ENCODE measurements at regions of chr1 and their contacts with region 1.

Region 1: DNA sequence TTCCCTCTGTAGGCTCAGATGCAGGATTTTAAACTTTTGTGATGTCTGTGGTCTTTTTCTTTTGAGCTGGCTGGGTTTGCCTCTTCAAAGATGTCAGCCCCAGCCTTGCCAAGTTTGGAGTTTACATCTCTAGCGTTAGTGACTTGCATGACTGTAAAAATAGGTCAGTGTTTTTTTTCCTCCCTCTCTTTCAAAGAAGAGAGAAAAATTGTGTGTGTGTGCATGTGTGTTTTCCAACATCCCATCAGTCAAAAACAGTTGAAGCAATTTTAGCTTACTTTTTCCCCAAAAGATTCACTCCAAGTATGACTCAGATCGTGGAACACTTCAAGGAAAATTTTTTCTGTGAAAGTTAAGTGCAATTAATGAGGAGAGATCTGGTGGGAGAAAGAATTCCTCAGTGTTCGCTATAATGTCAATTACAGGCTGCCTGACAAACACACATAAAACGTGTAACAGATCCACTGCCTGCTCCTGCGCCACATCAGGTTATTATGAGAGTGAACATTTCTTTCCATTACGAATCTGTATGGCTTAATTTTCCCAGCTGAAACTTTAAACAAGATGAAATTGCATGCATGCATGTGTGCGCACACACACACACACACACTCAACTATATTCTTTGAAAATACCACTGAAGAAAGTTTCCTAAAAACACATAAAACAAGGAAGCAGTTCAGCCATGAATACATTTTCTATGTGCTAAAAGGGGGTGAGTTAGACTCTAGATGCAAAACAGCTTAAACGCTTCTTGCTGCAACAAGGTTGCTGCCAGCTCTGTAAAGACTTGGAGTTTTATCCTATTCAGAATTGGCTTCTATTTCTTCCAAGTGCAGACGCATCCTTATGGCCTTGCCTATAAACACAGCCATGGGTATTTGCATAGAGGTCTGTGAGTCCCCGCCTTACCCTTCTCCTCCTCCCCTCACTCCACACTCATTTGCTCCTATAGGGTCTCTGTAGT is 55.5 kb downstream of the TLR5 start:
- DNase-seq: no peak
- ATAC-seq: no peak
- H3K4me3 Mint-ChIP-seq: no peak overlapping the region
- H3K27ac Mint-ChIP-seq: no peak overlapping the region
- H3K4me1 Mint-ChIP-seq: peaks cover 27% of the 10 kb centered on the region
- H3K27me3 Mint-ChIP-seq: peaks cover 58% of the 10 kb centered on the region
- CTCF ChIP-seq: no peak

Region 2: GRCh38 chr1:222736972-222737371 is 350.6 kb before region 1 on chr1 and contains the start of gene FAM177B:
- CTCF ChIA-PET with region 1: interaction called, 20 read pairs
- POLR2A ChIA-PET with region 1: no interaction called
- DNase-seq: no peak
- ATAC-seq: no peak
- H3K4me3 Mint-ChIP-seq: no peak within 1 kb of the TSS
- H3K27ac Mint-ChIP-seq: peak within 1 kb of the TSS; percentile 81
- H3K4me1 Mint-ChIP-seq: peaks cover 2% of the 10 kb centered on the region; the same call in 1 of the 2 replicates
- H3K27me3 Mint-ChIP-seq: no peaks in the 10 kb centered on the region
- CTCF ChIP-seq: no peak
- total RNA-seq, gene FAM177B: not detected in 3 replicates

Region 3: GRCh38 chr1:222792744-222793143 is 294.8 kb before region 1 on chr1:
- CTCF ChIA-PET with region 1: interaction called, 28 read pairs
- POLR2A ChIA-PET with region 1: no interaction called
- DNase-seq: no peak
- ATAC-seq: peak; percentile 58
- H3K4me3 Mint-ChIP-seq: no peak overlapping the region
- H3K27ac Mint-ChIP-seq: no peak overlapping the region
- H3K4me1 Mint-ChIP-seq: peaks cover 7% of the 10 kb centered on the region; the same call in 1 of the 2 replicates
- H3K27me3 Mint-ChIP-seq: peaks cover 26% of the 10 kb centered on the region
- CTCF ChIP-seq: 0 out of 2 replicates have a peak, but pooled peaks have one; percentile 13

Region 4: GRCh38 chr1:223029985-223030769 is 57.4 kb before region 1 on chr1:
- CTCF ChIA-PET with region 1: interaction called, 14 read pairs
- POLR2A ChIA-PET with region 1: interaction called, 3 read pairs
- DNase-seq: peak; percentile 54
- ATAC-seq: peak; percentile 84
- H3K4me3 Mint-ChIP-seq: peak overlapping the region; percentile 99
- H3K27ac Mint-ChIP-seq: peak overlapping the region; percentile 100
- H3K4me1 Mint-ChIP-seq: peaks cover 60% of the 10 kb centered on the region
- H3K27me3 Mint-ChIP-seq: no peaks in the 10 kb centered on the region
- CTCF ChIP-seq: no peak

Region 5: GRCh38 chr1:223074445-223075300 is 12.9 kb before region 1 on chr1:
- CTCF ChIA-PET with region 1: interaction called, 32 read pairs
- POLR2A ChIA-PET with region 1: no interaction called
- DNase-seq: no peak
- ATAC-seq: peak; percentile 51
- H3K4me3 Mint-ChIP-seq: no peak overlapping the region
- H3K27ac Mint-ChIP-seq: no peak overlapping the region
- H3K4me1 Mint-ChIP-seq: peaks cover 50% of the 10 kb centered on the region
- H3K27me3 Mint-ChIP-seq: peaks cover 62% of the 10 kb centered on the region
- CTCF ChIP-seq: no peak

Region 6: GRCh38 chr1:223114871-223115270 is 27.3 kb after region 1 on chr1:
- CTCF ChIA-PET with region 1: interaction called, 15 read pairs
- POLR2A ChIA-PET with region 1: no interaction called
- DNase-seq: no peak
- ATAC-seq: no peak
- H3K4me3 Mint-ChIP-seq: no peak overlapping the region
- H3K27ac Mint-ChIP-seq: no peak overlapping the region
- H3K4me1 Mint-ChIP-seq: peaks cover 9% of the 10 kb centered on the region
- H3K27me3 Mint-ChIP-seq: peaks cover 4% of the 10 kb centered on the region; the same call in 1 of the 2 replicates
- CTCF ChIP-seq: no peak

Region 7: GRCh38 chr1:223142795-223143536 is 55.4 kb after region 1 on chr1 and contains the start of gene TLR5:
- CTCF ChIA-PET with region 1: interaction called, 10 read pairs
- POLR2A ChIA-PET with region 1: no interaction called
- DNase-seq: peak; percentile 87
- ATAC-seq: peak; percentile 92
- H3K4me3 Mint-ChIP-seq: peak within 1 kb of the TSS; percentile 68
- H3K27ac Mint-ChIP-seq: no peak within 1 kb of the TSS
- H3K4me1 Mint-ChIP-seq: peaks cover 20% of the 10 kb centered on the region
- H3K27me3 Mint-ChIP-seq: peaks cover 48% of the 10 kb centered on the region
- CTCF ChIP-seq: peak; percentile 50
- total RNA-seq, gene TLR5: 0.46 to 1.1 TPM (median 0.73 TPM) in 3 replicates

Measured in WTC11 (cell line).